Activated T-helper 1 cell treated with anti-CD3 and anti-CD28 coated beads, Interleukin-12 subunit alpha, Interleukin-12 subunit beta, Interleukin-2, Interleukin-4 antibody, amounts not matched to agents 30 ng/mL and 10 ng/mL and 1 ng/mL, durations not matched to agents 14 hours and 24 hours and 36 hours (primary cell): ENCODE measurements at regions of chr10 and their contacts with region 1.

Region 1: DNA sequence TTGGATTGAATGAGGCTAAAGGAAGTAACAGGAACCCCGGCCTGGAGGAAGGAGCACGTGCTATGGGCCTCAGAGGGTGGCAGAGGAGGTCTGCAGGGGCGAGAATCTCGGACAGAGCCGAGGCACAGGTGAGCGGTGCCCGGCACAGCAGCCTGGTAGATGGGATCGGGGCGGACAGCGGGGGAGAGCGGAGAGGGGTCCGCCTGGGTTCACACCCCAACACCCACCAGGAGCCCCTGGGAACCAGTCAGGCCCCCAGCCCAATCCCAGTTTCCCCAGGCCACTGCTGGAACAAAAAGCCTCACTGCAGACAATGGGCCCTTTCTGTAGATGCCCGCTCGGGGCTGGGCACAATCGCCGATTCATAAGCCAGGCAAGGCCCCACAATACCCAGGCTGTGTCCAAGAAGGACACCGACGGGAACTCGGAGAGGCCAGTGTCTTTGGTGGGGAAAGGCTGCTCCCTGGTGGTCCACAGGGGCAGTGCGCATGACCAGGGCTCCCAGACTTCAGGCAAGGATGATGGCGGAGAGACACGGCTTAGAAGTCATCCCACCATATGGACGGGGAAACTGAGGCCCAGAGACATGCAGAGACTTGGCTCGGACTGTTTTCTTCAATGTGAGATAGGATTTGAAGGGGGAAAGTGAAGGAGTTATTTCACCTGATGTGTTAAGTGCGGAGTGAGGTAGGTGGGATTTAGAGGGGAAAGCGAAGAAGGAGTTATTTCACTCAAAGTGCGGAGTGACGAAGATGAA is 106.9 kb upstream of the GPR26 start:
- DNase-seq: peak; percentile 44
- H3K4me3 Mint-ChIP-seq: no peak overlapping the region
- H3K27ac Mint-ChIP-seq: no peak overlapping the region
- H3K4me1 Mint-ChIP-seq: no peaks in the 10 kb centered on the region
- H3K27me3 Mint-ChIP-seq: peaks cover 6% of the 10 kb centered on the region

Region 2: GRCh38 chr10:122648599-122649428 is 910.4 kb before region 1 on chr10:
- intact Hi-C with region 1: loop called (anchors 2 kb)
- DNase-seq: no peak
- H3K4me3 Mint-ChIP-seq: no peak overlapping the region
- H3K27ac Mint-ChIP-seq: no peak overlapping the region
- H3K4me1 Mint-ChIP-seq: no peaks in the 10 kb centered on the region
- H3K27me3 Mint-ChIP-seq: peaks cover 11% of the 10 kb centered on the region

Region 3: DNA sequence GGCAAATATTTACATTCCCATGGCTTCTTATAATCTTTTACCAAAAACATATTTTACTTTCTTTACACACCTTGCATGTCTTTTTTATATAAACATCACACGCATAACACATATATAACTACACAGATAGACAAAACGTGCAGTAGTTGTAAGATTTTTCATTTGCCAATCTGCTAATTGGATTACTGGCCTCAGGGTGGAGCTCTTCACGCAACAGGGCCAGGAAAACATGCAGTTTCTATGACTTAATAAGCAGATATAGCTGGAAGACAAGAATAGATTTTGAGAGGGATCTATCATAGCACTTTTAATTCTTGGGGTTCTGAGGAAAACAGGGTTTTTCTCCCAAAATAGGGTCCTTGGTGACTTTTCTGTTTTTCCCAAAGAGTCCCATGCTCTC is 537.7 kb before region 1 on chr10:
- intact Hi-C with region 1: loop called (anchors 2 kb)
- DNase-seq: no peak
- H3K4me3 Mint-ChIP-seq: no peak overlapping the region
- H3K27ac Mint-ChIP-seq: no peak overlapping the region
- H3K4me1 Mint-ChIP-seq: peaks cover 14% of the 10 kb centered on the region
- H3K27me3 Mint-ChIP-seq: no peaks in the 10 kb centered on the region

Region 4: DNA sequence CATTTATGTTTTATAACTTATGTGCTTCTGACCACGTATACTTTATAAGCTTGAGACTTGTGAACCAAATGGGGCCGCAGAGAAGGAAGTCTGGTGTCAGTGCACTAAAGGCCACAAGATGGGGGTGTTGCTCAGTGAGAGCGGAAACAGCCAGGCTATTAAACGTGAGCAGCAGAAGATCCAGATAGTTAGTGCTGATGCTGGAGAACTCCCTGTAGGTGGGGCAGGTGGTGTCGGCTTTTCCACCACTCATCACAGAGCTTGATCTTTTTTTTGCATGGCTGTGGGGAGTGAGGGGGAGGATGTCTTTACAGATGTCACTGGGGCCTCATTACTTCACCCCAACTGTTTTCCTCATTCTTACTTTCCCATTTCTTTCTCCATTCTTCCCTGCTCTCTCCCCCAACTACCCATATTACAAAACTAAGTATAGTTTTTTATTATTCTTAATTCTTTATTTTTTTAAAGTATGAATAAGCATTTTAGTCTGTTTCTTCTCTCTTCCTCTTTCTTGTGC is 515.8 kb before region 1 on chr10:
- intact Hi-C with region 1: loop called (anchors 1 kb)
- DNase-seq: peak; percentile 12
- H3K4me3 Mint-ChIP-seq: no peak overlapping the region
- H3K27ac Mint-ChIP-seq: no peak overlapping the region
- H3K4me1 Mint-ChIP-seq: peaks cover 18% of the 10 kb centered on the region
- H3K27me3 Mint-ChIP-seq: no peaks in the 10 kb centered on the region

Region 5: GRCh38 chr10:124197371-124198124 is 638.3 kb after region 1 on chr10:
- intact Hi-C with region 1: no loop called
- DNase-seq: no peak
- H3K4me3 Mint-ChIP-seq: no peak overlapping the region
- H3K27ac Mint-ChIP-seq: no peak overlapping the region
- H3K4me1 Mint-ChIP-seq: no peaks in the 10 kb centered on the region
- H3K27me3 Mint-ChIP-seq: peaks cover 11% of the 10 kb centered on the region